Heart left ventricle (tissue), 16 donors: ENCODE measurements at regions of chr9 and their contacts with region 1.

Region 1: GRCh38 chr9:100598641-100599145 is 20.8 kb downstream of the CAVIN4 start:
- DNase-seq: peak; percentile 79 to 91 (median 82)
- ATAC-seq: peak; percentile 66 to 86 (median 84)
- H3K4me3 ChIP-seq: peak overlapping the region; percentile 13 to 66 (median 54)
- H3K27ac ChIP-seq: no peak overlapping the region
- H3K4me1 ChIP-seq: peaks cover 0 to 17% (median 7%) of the 10 kb centered on the region in 12 donors
- H3K27me3 ChIP-seq: no peaks in the 10 kb centered on the region
- CTCF ChIP-seq: peak in 1 of 12 donors; percentile 6
- POLR2A ChIP-seq: no peak

Region 2: DNA sequence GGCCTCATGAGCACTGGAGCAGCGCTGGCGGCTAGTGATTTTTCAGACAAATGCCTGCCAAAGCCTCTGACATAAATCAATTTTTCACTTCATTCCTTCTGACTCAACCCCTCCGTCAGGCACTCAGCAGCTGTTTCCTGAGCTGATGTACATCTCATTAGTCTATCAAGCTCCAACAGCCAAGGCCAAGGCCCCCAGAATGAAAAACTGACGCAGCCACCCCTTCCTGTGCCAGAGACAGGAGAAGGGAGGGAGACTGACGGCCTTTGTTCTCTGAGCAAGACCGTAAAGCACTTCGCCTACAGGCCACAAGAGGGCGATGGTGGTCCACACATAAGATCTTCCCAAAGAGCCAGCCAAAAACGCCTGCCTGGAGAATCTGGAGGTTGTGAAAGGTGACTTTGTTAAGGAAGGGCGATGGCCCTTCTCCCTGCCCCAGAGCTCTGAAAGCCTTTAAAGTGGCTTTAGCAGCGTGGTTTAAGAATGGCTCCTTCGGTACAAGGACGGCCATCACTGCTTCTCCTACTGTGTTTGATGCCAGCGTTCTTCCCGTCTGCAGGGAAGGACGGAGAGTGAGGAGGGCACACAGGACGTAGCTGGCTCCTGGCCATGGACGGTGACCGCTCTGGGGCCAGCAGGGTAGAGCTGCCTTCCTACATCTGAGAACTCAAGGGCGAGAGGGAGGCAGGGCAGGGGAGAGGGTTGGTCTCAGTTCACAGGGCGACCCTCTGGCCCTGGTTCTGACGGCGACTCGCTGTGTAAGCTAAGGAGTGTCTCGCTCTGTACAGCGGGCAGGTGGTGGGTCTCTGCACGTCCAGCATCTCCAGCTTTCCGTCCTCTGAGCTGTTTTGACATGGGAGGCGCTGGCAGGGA is 1414.0 kb before region 1 on chr9:
- intact Hi-C with region 1: loop called in 3 of 10 experiments (anchors 10 kb)
- DNase-seq: peak; percentile 82 to 89 (median 86)
- ATAC-seq: peak; percentile 82 to 94 (median 90)
- H3K4me3 ChIP-seq: peak overlapping the region in 9 of 12 donors; percentile 14 to 46 (median 37)
- H3K27ac ChIP-seq: peak overlapping the region in 7 of 12 donors; percentile 10 to 51 (median 32)
- H3K4me1 ChIP-seq: peaks cover 0 to 19% (median 6%) of the 10 kb centered on the region in 12 donors
- H3K27me3 ChIP-seq: peaks cover 0 to 4% (median 0%) of the 10 kb centered on the region in 9 donors
- CTCF ChIP-seq: peak; percentile 89 to 98 (median 93)
- POLR2A ChIP-seq: no peak

Region 3: GRCh38 chr9:100028201-100028784 is 570.4 kb before region 1 on chr9:
- intact Hi-C with region 1: loop called in 7 of 10 experiments (anchors 5 to 10 kb)
- DNase-seq: peak; percentile 61 to 69 (median 65)
- ATAC-seq: peak; percentile 42 to 97 (median 94)
- H3K4me3 ChIP-seq: no peak overlapping the region
- H3K27ac ChIP-seq: no peak overlapping the region
- H3K4me1 ChIP-seq: peaks cover 0 to 11% (median 0%) of the 10 kb centered on the region in 12 donors
- H3K27me3 ChIP-seq: no peaks in the 10 kb centered on the region
- CTCF ChIP-seq: peak; percentile 89 to 96 (median 94)
- POLR2A ChIP-seq: no peak

Region 4: DNA sequence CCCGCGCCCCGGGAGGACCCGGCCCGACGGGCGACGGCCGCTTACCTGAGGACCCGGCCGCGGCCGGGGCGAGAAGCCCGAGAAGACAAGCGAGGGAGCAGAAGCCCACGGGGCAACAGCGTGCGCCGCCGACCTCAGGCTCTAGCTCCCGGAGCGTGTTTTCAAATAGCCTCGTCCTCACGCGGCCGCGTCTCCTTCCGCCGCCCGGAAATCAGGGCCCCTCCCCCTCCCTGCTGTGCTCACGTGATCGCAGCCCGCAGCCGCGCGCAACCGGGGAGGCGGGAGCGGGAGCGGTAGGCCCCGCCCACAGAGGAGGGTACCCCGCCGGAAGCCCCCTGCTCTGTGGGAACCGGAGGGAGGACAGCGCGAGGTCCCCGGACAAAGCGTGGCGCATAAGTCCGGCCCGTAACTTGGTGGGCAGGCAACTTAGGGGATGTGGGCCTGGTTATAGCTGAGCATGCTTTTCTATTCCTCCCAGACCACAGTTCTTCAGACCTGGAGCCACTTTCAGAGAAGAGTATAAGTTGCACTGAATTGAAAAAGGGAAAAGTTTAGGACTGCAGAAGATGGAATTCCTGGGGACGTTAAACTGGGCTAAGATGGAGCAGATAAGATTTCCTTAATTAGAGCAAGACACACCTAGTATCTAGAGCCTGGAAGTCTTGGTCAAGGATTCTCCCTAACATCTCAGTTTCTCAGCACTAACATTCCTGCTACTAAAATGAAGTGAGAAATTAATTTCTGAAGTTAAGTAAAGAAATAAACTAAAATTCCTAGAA is 245.8 kb before region 1 on chr9 and contains the start of gene TEX10:
- intact Hi-C with region 1: loop called in 4 of 10 experiments (anchors 5 to 10 kb)
- DNase-seq: peak; percentile 89 to 94 (median 90)
- ATAC-seq: peak; percentile 93 to 98 (median 98)
- H3K4me3 ChIP-seq: peak within 1 kb of the TSS; percentile 80 to 99 (median 96)
- H3K27ac ChIP-seq: peak within 1 kb of the TSS; percentile 46 to 90 (median 82)
- H3K4me1 ChIP-seq: peaks cover 0 to 28% (median 12%) of the 10 kb centered on the region in 12 donors
- H3K27me3 ChIP-seq: no peaks in the 10 kb centered on the region
- CTCF ChIP-seq: no peak
- POLR2A ChIP-seq: peak in 1 of 2 donors; percentile 66
- total RNA-seq, gene TEX10: 6.4 to 10.6 (median 9.2) TPM

Region 5: DNA sequence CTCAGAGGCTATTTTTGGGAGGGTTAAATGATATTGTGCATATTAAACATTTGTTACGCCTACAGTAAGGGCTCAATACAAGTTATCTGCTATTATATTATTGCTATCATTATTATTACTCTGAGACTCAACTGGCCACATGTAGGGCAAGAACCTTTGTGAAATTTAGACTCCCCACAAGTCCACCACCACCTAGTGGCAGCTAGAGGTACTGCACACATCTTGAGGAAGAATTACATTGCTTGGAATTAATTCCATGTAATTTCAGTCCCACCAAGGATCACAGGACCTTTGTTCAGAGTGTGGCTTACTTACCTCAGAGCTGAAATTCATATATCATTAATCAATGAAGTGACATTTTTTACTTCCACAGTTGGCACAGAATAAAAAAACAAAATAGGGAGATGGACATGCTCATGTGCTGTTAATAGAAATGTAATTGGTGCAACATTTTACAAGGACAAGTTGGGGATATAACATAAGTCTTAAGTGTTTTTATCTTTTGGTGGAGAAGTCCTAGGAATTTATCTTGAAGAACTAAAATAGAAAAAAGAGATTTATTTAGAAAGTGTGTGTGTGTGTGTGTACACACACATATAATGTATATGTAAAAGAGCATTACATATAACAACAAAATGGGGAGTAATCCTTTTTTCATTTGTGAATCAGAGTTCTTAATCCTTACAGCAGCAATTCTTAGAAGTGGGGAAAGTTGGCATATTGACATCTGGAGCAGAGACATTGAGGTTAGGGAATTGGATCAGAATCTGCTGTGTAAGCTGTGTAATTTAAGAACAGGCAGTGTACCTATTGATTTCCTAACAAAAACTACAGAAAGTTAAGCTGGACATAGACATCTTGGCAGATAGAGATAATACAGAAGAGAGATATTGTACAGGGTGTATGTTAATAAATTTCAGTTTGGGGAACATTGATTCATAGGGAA is 160.6 kb before region 1 on chr9:
- intact Hi-C with region 1: loop called in 5 of 10 experiments (anchors 5 to 10 kb)
- DNase-seq: peak in 4 of 5 donors; percentile 50 to 72 (median 58)
- ATAC-seq: peak in 3 of 4 donors; percentile 41 to 59 (median 56)
- H3K4me3 ChIP-seq: no peak overlapping the region
- H3K27ac ChIP-seq: no peak overlapping the region
- H3K4me1 ChIP-seq: no peaks in the 10 kb centered on the region
- H3K27me3 ChIP-seq: no peaks in the 10 kb centered on the region
- CTCF ChIP-seq: peak; percentile 89 to 100 (median 94)
- POLR2A ChIP-seq: no peak

Region 6: GRCh38 chr9:100499866-100500265 is 98.8 kb before region 1 on chr9:
- intact Hi-C with region 1: loop called in 6 of 10 experiments (anchors 1 to 5 kb)
- DNase-seq: no peak
- ATAC-seq: no peak
- H3K4me3 ChIP-seq: no peak overlapping the region
- H3K27ac ChIP-seq: no peak overlapping the region
- H3K4me1 ChIP-seq: no peaks in the 10 kb centered on the region
- H3K27me3 ChIP-seq: no peaks in the 10 kb centered on the region
- CTCF ChIP-seq: no peak
- POLR2A ChIP-seq: no peak

Region 7: GRCh38 chr9:100525563-100525962 is 73.1 kb before region 1 on chr9:
- intact Hi-C with region 1: no loop called
- DNase-seq: no peak
- ATAC-seq: no peak
- H3K4me3 ChIP-seq: no peak overlapping the region
- H3K27ac ChIP-seq: no peak overlapping the region
- H3K4me1 ChIP-seq: no peaks in the 10 kb centered on the region
- H3K27me3 ChIP-seq: no peaks in the 10 kb centered on the region
- CTCF ChIP-seq: no peak
- POLR2A ChIP-seq: no peak

Region 8: GRCh38 chr9:101235105-101235866 is 636.6 kb after region 1 on chr9:
- intact Hi-C with region 1: loop called in 3 of 10 experiments (anchors 10 kb)
- DNase-seq: no peak
- ATAC-seq: peak in 1 of 4 donors; percentile 36
- H3K4me3 ChIP-seq: no peak overlapping the region
- H3K27ac ChIP-seq: no peak overlapping the region
- H3K4me1 ChIP-seq: no peaks in the 10 kb centered on the region
- H3K27me3 ChIP-seq: peaks cover 0 to 3% (median 0%) of the 10 kb centered on the region in 9 donors
- CTCF ChIP-seq: peak; percentile 32 to 67 (median 50)
- POLR2A ChIP-seq: no peak